Posterior vena cava (tissue), 2 donors: ENCODE measurements at regions of chr5 and their contacts with region 1.

Region 1: GRCh38 chr5:174311531-174312269 is 266.2 kb downstream of the NSG2 start:
- DNase-seq: peak; percentile 91

Region 2: DNA sequence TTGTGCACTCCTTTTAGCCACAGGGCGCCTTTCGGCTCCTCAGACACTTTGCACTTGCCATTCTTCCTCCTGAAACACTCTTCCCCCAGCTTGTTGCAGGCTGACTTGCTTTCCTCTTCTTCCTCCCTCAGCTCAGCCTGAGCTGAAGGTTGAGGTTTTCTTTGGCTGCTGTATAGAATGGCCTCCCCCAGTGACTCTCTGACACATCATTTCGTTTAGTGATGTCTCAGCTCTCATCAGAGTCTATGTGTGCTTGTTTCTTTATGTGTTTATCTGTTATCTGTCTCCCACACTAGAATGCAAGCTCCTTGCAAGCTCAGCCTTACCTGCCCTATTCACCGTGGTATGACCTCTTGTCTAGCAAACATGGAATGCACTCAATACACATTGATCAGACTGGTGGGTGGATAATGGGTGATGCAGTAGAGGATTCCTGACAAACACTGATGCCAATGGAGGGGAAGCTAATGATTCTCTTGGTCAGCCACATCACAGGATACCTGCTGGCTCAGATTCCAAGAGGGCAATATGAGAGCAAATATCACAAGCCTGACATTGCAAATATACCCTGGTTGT is 870.6 kb before region 1 on chr5:
- intact Hi-C with region 1: loop called in 1 of 2 experiments (anchors 5 kb)
- DNase-seq: no peak

Region 3: GRCh38 chr5:173615884-173616576 is 695.7 kb before region 1 on chr5:
- intact Hi-C with region 1: loop called in 1 of 2 experiments (anchors 5 kb)
- DNase-seq: peak; percentile 88

Region 4: DNA sequence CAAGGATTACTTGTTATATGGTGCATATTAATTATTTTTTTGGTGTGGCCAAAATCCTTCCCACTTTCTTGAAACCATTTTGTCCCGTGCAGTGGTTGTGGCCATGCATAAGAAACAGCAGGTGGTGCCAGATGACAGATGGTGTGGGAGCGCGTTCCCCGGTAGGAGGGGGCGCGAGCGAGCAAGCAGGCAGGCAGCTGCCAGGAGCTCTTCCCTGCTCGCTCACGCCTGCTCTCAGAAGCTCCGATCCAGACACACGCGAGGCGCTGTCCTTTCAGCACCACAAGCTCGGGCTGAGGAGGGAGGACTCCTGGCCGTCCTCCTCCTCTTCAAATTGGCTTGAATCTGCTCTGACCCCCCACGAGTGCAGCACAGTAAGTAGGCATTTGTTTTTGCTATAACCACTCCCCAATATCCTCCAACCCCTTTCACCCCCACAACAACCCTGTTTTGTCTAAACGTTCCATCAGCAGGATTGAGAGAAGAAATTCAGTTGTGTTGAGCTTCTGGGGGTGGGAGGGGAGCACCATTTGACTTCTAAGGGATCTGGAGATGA is 266.2 kb before region 1 on chr5 and contains the start of gene NSG2:
- intact Hi-C with region 1: loop called (anchors 2 to 5 kb)
- DNase-seq: peak; percentile 91
- total RNA-seq, gene NSG2: 0.29 TPM in 1 of 2 donors, not detected in the other